GM12878 (cell line): ENCODE measurements at regions of chr7 and their contacts with region 1.

Region 1: GRCh38 chr7:20238754-20239324 is 21.7 kb upstream of the MACC1 start:
- DNase-seq: peak; percentile 98
- ATAC-seq: peak; percentile 72
- H3K4me3 ChIP-seq: peak overlapping the region; percentile 35; the same call in 1 of the 2 replicates
- H3K27ac ChIP-seq: peak overlapping the region; percentile 76
- H3K4me1 ChIP-seq: peaks cover 49% of the 10 kb centered on the region
- H3K27me3 ChIP-seq: no peaks in the 10 kb centered on the region
- CTCF ChIP-seq: no peak
- EP300 ChIP-seq: peak; percentile 99 to 100
- POLR2A ChIP-seq: peak; percentile 29; the same call in 1 of the 2 replicates
- RAD21 ChIP-seq: no peak

Region 2: DNA sequence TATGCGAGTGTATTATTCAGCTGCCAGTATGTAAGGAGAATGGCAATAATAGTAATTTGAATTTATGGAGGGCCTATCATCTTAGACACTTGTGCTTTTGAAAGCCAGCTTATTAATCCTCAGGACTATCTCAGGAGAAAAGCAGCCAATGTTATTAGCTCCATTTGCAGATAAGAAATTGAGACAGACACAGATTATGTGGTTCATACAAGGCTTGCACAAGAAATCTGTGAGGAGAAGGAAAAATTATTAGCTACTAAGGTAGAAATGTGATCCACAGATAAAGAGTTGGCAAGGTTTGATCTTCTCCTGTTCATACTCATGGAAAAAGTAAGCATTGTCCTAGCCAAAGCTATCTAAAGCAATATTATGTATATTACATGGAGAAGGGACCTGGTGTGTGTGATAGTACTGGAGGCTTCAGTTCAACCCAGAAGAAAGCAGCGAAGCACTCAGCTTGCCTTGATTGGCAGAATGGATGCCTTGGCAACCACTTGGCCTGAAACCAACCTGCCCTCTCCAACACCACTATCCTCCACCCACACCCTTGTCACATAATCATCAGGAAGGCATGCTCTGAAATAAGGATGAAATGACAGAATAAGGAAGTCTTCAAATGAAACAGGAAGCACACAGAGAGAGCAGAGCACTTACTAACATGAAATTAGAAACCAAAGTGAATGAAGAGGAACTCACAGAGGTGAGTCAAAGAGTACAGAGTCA is 39.7 kb before region 1 on chr7:
- CTCF ChIA-PET with region 1: interaction called, 5 read pairs
- POLR2A ChIA-PET with region 1: interaction called, 9 read pairs
- RAD21 ChIA-PET with region 1: interaction called, 14 read pairs
- SMC1A ChIA-PET with region 1: interaction called, 54 read pairs
- in situ Hi-C with region 1: no loop called
- intact Hi-C with region 1: loop called (anchors 2 kb)
- DNase-seq: peak; percentile 94
- ATAC-seq: peak; percentile 77
- H3K4me3 ChIP-seq: no peak overlapping the region; the same call in 1 of the 2 replicates
- H3K27ac ChIP-seq: peak overlapping the region; percentile 3; the same call in 1 of the 2 replicates
- H3K4me1 ChIP-seq: peaks cover 25% of the 10 kb centered on the region
- H3K27me3 ChIP-seq: no peaks in the 10 kb centered on the region
- CTCF ChIP-seq: no peak
- EP300 ChIP-seq: peak in 1 of 2 experiments; percentile 32; a peak in 1 of 4 replicates
- POLR2A ChIP-seq: no peak
- RAD21 ChIP-seq: no peak

Region 3: GRCh38 chr7:20260223-20260622 is 21.4 kb after region 1 on chr7:
- CTCF ChIA-PET with region 1: interaction called, 10 read pairs
- POLR2A ChIA-PET with region 1: interaction called, 4 read pairs
- RAD21 ChIA-PET with region 1: interaction called, 6 read pairs
- SMC1A ChIA-PET with region 1: interaction called, 10 read pairs
- in situ Hi-C with region 1: no loop called
- intact Hi-C with region 1: no loop called
- DNase-seq: no peak
- ATAC-seq: no peak
- H3K4me3 ChIP-seq: no peak overlapping the region
- H3K27ac ChIP-seq: no peak overlapping the region
- H3K4me1 ChIP-seq: no peaks in the 10 kb centered on the region
- H3K27me3 ChIP-seq: no peaks in the 10 kb centered on the region
- CTCF ChIP-seq: no peak
- EP300 ChIP-seq: no peak
- POLR2A ChIP-seq: no peak
- RAD21 ChIP-seq: no peak

Region 4: DNA sequence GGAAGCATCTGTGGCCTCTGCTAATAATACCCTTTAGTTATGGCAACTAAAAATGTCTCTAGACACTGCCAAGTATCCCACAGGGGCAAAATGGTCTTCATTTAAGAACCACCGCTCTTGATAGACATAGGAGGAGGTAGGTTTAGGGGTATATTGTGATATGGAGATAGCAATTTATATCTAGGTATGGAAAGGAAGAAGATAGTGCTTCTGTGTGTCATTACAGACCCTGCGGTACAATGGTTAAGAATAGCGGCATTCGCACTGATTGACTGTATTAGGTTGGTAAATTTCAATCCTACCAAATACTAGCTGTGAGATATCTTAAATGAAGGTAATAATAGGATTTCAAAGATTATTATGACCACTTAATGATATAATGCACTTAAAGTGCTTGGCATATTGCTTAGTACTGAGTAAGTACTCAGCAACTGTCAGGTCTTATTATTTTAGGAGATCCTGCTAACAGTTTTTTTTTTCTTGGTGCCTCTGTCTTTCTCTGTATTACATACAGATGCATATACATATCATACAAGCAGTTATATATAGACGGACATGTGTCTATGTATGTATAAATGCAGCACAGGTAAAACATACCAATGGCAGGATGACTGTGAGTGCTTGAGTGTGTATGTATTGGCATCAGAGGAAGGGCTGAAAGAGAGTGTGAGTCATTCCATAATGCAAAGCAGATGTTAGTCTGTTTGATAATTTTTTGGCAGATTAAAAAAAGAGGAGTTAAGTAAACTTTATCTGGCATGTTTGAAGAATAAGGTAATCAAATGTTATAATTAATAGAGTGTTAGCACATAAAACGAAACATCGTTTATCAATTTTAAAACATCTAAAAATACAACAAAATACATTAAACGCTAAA is 41.9 kb after region 1 on chr7:
- CTCF ChIA-PET with region 1: interaction called, 5 read pairs
- POLR2A ChIA-PET with region 1: interaction called, 9 read pairs
- RAD21 ChIA-PET with region 1: interaction called, 89 read pairs
- SMC1A ChIA-PET with region 1: interaction called, 139 read pairs
- in situ Hi-C with region 1: loop called (anchors 5 kb)
- intact Hi-C with region 1: loop called (anchors 1 kb)
- DNase-seq: no peak
- ATAC-seq: peak; percentile 23
- H3K4me3 ChIP-seq: no peak overlapping the region
- H3K27ac ChIP-seq: no peak overlapping the region
- H3K4me1 ChIP-seq: peaks cover 11% of the 10 kb centered on the region; the same call in 1 of the 2 replicates
- H3K27me3 ChIP-seq: no peaks in the 10 kb centered on the region
- CTCF ChIP-seq: no peak
- EP300 ChIP-seq: no peak
- POLR2A ChIP-seq: no peak
- RAD21 ChIP-seq: no peak

Region 5: DNA sequence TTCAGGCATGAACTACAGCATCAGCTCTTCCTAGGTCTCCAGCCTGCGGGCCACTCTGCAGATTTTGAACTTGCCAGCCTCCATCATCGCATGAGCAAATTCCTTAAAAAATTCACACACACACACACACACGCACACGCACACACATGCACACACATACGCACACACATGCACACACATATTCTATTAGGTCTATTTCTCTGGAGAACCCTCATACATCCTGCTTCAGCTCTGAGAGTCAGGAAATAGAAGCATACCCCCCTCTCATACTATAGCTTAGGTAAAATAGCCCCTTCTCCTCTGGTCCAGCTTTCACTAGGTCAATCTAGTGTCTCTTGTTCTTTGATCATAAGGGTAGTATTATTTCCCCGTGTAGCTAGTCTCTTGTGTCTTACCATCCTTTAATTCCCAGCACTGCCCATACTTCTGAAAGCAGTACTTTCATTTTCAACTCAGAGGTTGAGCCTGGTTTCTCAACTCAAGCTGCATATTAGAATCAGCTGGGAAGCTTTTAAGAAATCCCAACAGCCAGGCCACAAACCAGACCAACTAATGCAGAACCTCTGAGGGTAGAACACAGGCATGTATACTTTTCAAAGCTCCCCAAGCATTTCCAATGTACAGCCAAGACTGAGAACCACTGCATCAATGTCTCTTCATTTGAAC is 60.9 kb after region 1 on chr7:
- CTCF ChIA-PET with region 1: interaction called, 10 read pairs
- POLR2A ChIA-PET with region 1: interaction called, 15 read pairs
- RAD21 ChIA-PET with region 1: interaction called, 52 read pairs
- SMC1A ChIA-PET with region 1: interaction called, 229 read pairs
- in situ Hi-C with region 1: no loop called
- intact Hi-C with region 1: loop called (anchors 2 kb)
- DNase-seq: peak; percentile 83
- ATAC-seq: peak; percentile 70
- H3K4me3 ChIP-seq: no peak overlapping the region
- H3K27ac ChIP-seq: peak overlapping the region; percentile 76
- H3K4me1 ChIP-seq: peaks cover 16% of the 10 kb centered on the region
- H3K27me3 ChIP-seq: no peaks in the 10 kb centered on the region
- CTCF ChIP-seq: no peak
- EP300 ChIP-seq: no peak
- POLR2A ChIP-seq: no peak
- RAD21 ChIP-seq: no peak

Region 6: DNA sequence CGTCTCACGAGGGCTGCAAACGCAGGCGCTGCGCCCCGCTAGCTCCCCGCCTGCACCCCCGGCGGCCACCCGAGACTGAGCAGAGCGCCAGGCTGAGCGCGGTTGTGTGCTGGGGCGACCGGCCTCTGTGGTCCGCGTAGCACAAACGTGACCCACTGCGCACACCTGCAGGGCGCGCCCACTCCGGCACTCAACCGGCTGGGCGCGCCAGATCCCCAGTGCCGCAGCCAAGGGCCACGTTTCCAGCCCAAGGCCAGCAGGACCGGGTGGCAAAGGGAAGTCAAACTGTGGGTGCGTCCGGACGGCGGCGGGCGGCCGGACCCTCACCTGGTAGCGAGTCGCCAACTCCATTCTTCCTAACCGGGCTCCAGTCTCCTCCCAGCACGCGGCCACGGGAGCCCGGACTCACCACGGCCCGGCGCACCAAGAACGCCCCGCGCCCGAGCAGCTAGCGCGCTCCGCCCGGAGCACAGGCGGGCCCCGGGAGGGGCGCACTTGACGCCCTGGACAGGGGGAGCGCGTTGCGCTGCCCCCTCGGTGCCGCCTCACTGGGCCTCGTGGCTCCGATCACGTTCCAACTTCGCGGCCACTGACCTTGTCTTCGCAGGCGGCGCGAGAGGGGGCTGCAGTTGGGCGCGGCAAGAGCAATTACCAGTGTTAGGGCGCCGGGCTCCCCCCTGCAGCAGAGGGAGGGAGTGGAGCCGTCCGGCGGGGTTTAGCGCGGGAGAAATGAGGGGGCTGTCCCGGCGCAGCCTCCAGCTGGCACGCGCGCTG is 1706.8 kb after region 1 on chr7 and contains the start of gene CDCA7L:
- CTCF ChIA-PET with region 1: no interaction called
- POLR2A ChIA-PET with region 1: no interaction called
- RAD21 ChIA-PET with region 1: no interaction called
- SMC1A ChIA-PET with region 1: no interaction called
- in situ Hi-C with region 1: loop called (anchors 25 kb)
- intact Hi-C with region 1: no loop called
- DNase-seq: peak; percentile 32
- ATAC-seq: peak; percentile 85
- H3K4me3 ChIP-seq: peak within 1 kb of the TSS; percentile 80
- H3K27ac ChIP-seq: peak within 1 kb of the TSS; percentile 85
- H3K4me1 ChIP-seq: peaks cover 44% of the 10 kb centered on the region
- H3K27me3 ChIP-seq: no peaks in the 10 kb centered on the region
- CTCF ChIP-seq: 0 out of 6 replicates have a peak, but pooled peaks of 1 of the 3 experiments have one; percentile 2
- EP300 ChIP-seq: no peak
- POLR2A ChIP-seq: peak; percentile 93
- RAD21 ChIP-seq: peak; percentile 20; the same call in 1 of the 2 replicates
- polyA plus RNA-seq, gene CDCA7L: 30.3 to 45.2 TPM